Left ventricle myocardium inferior (tissue), 1 donor: ENCODE measurements at regions of chr19 and their contacts with region 1.

Region 1: DNA sequence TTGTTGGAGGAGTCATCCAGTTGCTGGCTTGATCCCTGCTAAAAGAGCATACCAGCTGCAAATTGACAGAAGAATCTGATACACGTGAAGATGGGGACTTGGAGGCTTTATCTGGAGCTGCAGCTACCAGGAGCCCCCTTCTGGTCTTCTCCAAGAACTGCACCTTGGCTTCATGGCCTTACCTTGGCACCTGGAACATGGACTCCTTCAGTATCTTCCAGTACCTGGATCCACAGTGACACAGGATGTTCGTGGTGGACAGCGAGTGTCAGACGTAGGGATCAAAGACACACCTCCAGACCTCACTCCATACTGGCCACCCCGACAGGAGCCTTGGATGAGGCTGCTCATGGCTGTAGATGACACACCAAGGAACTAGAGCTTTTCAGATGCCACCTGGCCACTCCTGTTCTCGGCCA is 9.9 kb upstream of the ACSBG2 start:
- DNase-seq: peak; percentile 47
- H3K4me3 ChIP-seq: no peak overlapping the region
- H3K27ac ChIP-seq: no peak overlapping the region
- H3K4me1 ChIP-seq: no peaks in the 10 kb centered on the region
- H3K27me3 ChIP-seq: no peaks in the 10 kb centered on the region
- CTCF ChIP-seq: peak; percentile 98

Region 2: DNA sequence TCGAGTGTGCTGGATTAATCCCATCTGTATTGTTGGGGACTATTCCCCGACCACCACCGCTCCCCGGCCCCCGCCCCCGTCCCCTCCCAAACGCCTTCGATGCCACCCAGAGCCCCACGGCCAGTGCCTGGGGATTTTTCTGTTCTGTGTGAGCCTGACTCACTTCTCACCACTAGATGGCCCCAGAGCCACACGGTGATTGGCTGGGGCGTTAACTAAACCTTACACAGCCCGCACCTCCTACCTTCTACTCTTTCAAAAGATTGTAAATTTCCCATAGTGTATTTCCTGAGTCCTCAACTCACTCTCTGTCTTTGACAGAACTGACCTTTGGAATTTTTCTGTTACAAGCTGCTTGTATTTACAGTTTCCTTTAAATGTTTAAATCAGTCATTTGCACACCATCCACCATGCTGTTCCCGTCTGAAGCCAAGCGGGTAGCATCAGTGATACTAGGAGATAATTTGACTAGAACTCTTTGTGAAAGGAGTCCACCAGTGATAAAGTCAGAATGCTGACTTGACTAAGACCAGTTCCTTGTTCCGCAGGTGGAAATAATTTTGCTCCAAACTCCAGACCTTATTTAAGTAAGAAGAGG is 76.7 kb before region 1 on chr19:
- intact Hi-C with region 1: loop called (anchors 2 kb)
- DNase-seq: peak; percentile 69
- H3K4me3 ChIP-seq: peak overlapping the region; percentile 10
- H3K27ac ChIP-seq: no peak overlapping the region
- H3K4me1 ChIP-seq: peaks cover 18% of the 10 kb centered on the region
- H3K27me3 ChIP-seq: no peaks in the 10 kb centered on the region
- CTCF ChIP-seq: peak; percentile 94

Region 3: DNA sequence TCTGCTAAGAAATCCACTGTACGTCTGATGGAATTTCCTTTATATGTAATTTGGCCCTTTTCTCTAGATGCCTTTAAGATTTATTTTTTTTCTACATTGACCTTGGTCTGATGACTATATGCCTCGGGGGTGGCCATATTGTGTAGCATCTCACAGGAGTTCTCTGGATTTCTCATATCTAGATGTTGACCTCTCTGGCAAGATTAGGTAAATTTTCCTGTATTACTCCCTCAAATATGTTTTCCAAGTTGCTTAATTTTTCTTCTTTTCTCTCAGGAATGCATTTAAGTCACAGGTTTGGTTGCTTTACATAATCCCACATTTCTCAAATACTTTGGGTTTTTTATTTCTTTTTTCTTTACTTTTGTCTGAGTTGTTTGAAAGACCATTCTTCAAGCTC is 46.0 kb after region 1 on chr19:
- intact Hi-C with region 1: no loop called
- DNase-seq: no peak
- H3K4me3 ChIP-seq: no peak overlapping the region
- H3K27ac ChIP-seq: no peak overlapping the region
- H3K4me1 ChIP-seq: no peaks in the 10 kb centered on the region
- H3K27me3 ChIP-seq: peaks cover 37% of the 10 kb centered on the region
- CTCF ChIP-seq: no peak